ENCODE measurements at regions of chr17 and their contacts with region 1.

Region 1: DNA sequence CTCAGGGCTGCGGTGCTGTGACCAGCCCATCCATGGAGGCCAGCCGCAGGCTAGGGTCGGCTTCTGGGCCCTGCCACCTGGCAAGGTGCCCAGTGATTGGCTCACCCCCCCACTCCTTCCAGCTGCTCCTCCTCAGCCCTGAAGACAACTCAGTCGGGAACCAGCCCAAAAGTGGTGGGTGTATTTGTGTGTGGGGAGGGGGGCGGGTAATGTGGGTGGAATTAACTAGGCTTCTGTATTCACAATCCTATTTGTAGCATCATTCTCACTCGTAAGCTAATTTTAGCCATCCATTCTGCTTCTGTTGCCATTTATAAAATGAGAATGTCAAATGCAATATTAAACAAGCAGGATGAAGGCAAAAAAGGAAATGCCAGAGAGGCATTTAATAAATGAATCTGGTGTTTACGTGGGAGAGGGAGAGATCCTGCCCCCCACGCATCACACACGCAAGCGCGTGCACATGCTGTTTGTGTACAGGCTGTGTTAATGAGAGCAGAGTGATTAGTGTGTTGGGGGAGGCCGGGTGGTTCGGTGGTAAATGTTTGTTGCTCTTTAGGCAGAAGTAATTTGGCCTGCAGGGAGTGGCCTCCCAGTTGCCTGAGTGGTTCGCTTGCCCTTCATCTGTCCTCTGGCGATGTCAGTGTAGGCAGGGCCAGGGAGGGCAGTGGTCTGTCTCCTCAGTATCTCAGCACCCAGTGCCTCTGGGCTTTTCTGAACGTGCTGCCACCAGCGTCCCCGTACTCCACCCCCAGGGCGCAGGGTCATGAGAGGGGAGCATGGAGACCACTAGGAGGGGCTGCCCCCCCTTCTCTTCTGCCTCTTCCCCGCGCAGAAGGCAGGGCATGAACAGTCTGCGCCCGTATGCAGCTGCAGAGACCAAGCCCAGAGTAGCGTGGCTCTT is 140.1 kb downstream of the CCDC182 start:
- DNase-seq: peak; percentile 48
- ATAC-seq: peak; percentile 76
- H3K4me3 Mint-ChIP-seq: peak overlapping the region; percentile 72
- H3K27ac Mint-ChIP-seq: peak overlapping the region; percentile 86
- H3K4me1 Mint-ChIP-seq: peaks cover 56% of the 10 kb centered on the region
- H3K27me3 Mint-ChIP-seq: no peaks in the 10 kb centered on the region
- CTCF ChIP-seq: no peak

Region 2: DNA sequence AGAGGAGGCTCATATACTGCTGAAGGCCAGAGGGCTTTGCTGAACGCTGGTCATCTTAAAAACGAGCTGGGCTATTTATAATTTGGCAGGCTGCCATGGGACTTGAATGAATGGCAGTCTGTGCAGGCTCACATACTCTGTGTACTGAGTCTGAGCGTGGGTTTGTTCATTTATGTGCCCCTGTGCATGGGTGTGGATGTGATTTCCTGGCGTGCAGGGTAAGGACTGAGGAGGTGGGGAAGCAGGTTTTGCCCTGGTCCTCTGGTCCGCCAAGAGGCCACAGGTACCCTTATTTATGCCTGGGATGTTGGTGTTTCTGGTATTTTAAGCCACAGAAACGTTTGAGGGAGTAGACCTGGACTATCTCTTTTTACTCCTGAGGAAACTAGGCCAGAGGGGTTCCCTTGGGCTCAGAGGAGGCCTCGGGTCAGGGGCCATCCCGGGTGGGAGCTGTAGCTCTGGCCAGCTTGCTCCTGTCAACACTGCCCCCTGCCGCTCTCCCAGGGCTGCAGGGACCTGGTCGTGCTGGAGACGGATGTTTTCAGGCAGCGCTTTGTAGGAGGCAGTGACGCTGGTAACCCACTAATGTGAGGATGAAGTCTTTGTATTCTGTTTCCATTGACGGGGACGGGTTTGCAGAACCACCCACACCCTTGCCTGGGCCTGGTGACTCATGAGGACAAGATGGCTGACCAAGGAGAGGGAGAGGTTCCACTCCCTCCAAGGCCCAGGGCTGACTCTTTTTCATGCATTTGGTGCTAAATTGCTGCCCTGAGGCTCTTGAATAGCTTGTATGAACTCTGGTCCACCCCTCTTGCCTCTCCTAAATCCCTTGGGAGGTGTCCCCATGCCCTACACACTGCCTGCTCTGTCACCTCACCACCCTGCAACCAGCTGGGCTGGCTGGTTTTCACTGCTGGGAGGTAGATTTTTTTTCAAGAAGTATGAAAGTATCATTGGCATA is 164.2 kb before region 1 on chr17:
- CTCF ChIA-PET with region 1: no interaction called
- POLR2A ChIA-PET with region 1: no interaction called
- intact Hi-C with region 1: loop called (anchors 5 kb)
- DNase-seq: no peak
- ATAC-seq: peak; percentile 74
- H3K4me3 Mint-ChIP-seq: peak overlapping the region; percentile 32
- H3K27ac Mint-ChIP-seq: peak overlapping the region; percentile 81
- H3K4me1 Mint-ChIP-seq: peaks cover 91% of the 10 kb centered on the region
- H3K27me3 Mint-ChIP-seq: no peaks in the 10 kb centered on the region
- CTCF ChIP-seq: no peak

Region 3: GRCh38 chr17:57622683-57623433 is 17.8 kb after region 1 on chr17:
- CTCF ChIA-PET with region 1: interaction called, 5 read pairs
- POLR2A ChIA-PET with region 1: interaction called, 73 read pairs
- intact Hi-C with region 1: loop called (anchors 1 kb)
- DNase-seq: no peak
- ATAC-seq: peak; percentile 82
- H3K4me3 Mint-ChIP-seq: peak overlapping the region; percentile 77
- H3K27ac Mint-ChIP-seq: peak overlapping the region; percentile 89
- H3K4me1 Mint-ChIP-seq: peaks cover 60% of the 10 kb centered on the region
- H3K27me3 Mint-ChIP-seq: no peaks in the 10 kb centered on the region
- CTCF ChIP-seq: no peak

Region 4: DNA sequence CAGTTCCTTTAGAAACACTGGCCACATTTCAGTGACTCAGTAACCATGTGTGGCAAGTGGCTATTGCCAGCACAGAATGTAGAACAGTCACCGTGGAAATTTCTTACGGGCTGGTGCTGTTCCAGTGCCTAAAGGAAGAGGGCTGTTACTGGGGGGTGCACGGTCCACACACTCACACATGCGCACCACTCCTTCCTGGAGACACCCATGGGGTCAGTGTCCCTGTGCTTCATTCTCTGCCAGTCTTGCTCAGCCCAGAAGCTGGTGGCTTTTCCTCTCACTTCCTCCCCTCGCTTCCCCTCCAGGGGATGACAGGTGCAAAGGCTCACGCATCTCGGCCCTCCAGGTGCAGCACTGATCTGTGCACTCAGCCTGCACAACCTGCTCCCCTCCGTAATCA is 24.4 kb after region 1 on chr17:
- CTCF ChIA-PET with region 1: interaction called, 4 read pairs
- POLR2A ChIA-PET with region 1: interaction called, 73 read pairs
- intact Hi-C with region 1: loop called (anchors 1 kb)
- DNase-seq: peak; percentile 54
- ATAC-seq: peak; percentile 91
- H3K4me3 Mint-ChIP-seq: peak overlapping the region; percentile 57
- H3K27ac Mint-ChIP-seq: peak overlapping the region; percentile 83
- H3K4me1 Mint-ChIP-seq: peaks cover 66% of the 10 kb centered on the region
- H3K27me3 Mint-ChIP-seq: no peaks in the 10 kb centered on the region
- CTCF ChIP-seq: no peak

Region 5: DNA sequence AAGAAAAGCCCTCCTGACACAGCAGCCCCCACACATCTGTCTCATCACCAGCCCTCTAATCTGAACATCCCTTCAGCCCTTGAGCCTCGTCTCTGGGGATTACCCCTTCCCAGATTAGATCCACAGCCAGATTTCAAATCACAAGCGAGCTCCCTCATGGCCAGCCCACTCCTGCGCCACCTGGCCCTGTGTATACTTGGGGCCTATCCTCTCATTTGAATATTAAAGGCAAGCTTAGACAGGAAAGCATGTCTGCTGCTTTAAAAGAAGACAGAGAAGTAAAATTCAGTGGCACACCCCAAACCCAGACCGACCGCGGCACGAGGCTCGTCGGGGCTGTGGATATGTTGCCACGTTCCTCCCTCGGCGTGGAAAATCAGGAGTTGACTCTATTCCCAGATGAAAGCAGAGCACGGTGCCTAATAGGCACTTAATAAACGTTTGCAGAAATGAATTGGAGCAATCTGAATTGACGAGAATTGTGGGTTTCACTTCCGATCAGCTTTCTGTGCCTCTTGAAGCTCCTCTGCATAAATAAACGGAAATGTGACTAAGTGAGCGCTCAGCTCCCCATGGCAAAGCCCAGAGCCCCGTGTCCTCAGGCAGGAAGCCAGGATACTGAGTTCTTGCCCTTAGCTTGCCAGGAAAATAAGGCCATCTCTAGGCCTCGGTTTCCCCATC is 32.1 kb after region 1 on chr17:
- CTCF ChIA-PET with region 1: interaction called, 10 read pairs
- POLR2A ChIA-PET with region 1: interaction called, 3 read pairs
- intact Hi-C with region 1: loop called (anchors 2 kb)
- DNase-seq: no peak
- ATAC-seq: peak; percentile 72
- H3K4me3 Mint-ChIP-seq: peak overlapping the region; percentile 39
- H3K27ac Mint-ChIP-seq: peak overlapping the region; percentile 91
- H3K4me1 Mint-ChIP-seq: peaks cover 24% of the 10 kb centered on the region
- H3K27me3 Mint-ChIP-seq: no peaks in the 10 kb centered on the region
- CTCF ChIP-seq: no peak

Region 6: GRCh38 chr17:57662644-57663308 is 57.8 kb after region 1 on chr17:
- CTCF ChIA-PET with region 1: interaction called, 18 read pairs
- POLR2A ChIA-PET with region 1: interaction called, 8 read pairs
- intact Hi-C with region 1: loop called (anchors 1 kb)
- DNase-seq: peak; percentile 32
- ATAC-seq: peak; percentile 80
- H3K4me3 Mint-ChIP-seq: peak overlapping the region; percentile 73
- H3K27ac Mint-ChIP-seq: peak overlapping the region; percentile 61
- H3K4me1 Mint-ChIP-seq: peaks cover 41% of the 10 kb centered on the region
- H3K27me3 Mint-ChIP-seq: no peaks in the 10 kb centered on the region
- CTCF ChIP-seq: no peak

Region 7: GRCh38 chr17:57671667-57672632 is 66.9 kb after region 1 on chr17:
- CTCF ChIA-PET with region 1: interaction called, 95 read pairs
- POLR2A ChIA-PET with region 1: interaction called, 9 read pairs
- intact Hi-C with region 1: loop called (anchors 1 kb)
- DNase-seq: peak; percentile 56
- ATAC-seq: peak; percentile 91
- H3K4me3 Mint-ChIP-seq: no peak overlapping the region
- H3K27ac Mint-ChIP-seq: no peak overlapping the region
- H3K4me1 Mint-ChIP-seq: peaks cover 8% of the 10 kb centered on the region
- H3K27me3 Mint-ChIP-seq: no peaks in the 10 kb centered on the region
- CTCF ChIP-seq: peak; percentile 88

Region 8: DNA sequence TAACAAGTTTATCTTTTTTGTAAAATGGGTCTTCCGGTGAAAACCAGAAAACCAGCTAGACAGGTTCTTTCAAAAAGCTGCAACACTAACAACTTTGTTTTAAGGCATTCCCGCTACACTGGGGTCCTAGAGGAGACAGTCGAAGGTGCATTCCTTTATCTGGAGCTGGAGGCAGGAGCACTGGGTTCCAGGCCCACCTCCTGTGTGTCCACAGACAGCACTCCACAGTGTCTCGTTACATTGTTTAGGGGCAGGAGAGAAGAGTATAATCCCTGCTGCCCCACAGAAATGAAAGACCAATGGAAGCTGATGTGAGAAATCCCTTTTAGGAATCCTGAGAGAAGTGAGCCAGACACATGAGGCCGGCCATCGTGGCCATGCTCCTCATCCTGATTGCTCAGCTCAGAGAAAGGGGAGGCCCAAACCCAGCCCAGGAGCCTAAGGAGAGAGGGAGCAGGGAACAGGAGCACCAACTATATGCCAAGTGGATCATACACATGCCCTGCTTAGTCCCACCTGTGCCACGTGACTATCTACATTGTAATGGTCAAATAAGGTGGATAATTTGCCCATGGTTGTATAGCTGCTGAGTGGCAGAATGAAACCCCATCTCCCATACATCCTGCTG is 80.6 kb after region 1 on chr17:
- CTCF ChIA-PET with region 1: no interaction called
- POLR2A ChIA-PET with region 1: no interaction called
- intact Hi-C with region 1: no loop called
- DNase-seq: no peak
- ATAC-seq: no peak
- H3K4me3 Mint-ChIP-seq: no peak overlapping the region
- H3K27ac Mint-ChIP-seq: no peak overlapping the region
- H3K4me1 Mint-ChIP-seq: peaks cover 3% of the 10 kb centered on the region
- H3K27me3 Mint-ChIP-seq: no peaks in the 10 kb centered on the region
- CTCF ChIP-seq: no peak